ENCODE measurements at regions of chr10 and their contacts with region 1.

Region 1: DNA sequence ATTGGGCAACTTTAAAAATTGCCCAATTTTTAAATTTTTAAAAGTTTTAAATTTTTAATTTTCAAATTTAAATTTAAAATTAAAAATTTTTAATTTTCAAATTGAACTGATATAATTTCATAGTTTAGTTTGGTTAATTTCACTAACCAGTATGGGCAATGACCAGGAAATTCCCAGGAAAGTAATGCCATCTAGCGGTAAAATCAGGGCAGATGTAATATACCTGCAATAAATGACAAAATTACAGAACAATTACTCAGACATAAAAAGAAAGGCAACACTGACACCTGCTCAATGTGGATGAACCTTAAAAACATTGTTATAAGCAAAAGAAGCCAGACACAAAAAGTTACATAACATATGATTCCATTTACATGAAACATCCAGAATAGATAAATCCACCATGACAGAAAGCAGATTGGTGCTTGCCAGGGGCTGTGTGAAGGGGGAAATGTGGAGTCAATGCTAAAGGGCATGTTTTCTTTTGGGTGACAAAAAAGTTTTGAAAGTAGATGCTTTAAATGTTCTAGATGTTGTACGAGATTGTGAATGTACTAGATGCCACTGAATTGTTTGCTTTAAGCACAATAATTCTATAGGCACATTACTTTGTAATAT is 28.6 kb upstream of the SLC16A12 start:
- DNase-seq: peak; percentile 37
- ATAC-seq: peak; percentile 73 to 84
- H3K4me3 ChIP-seq: no peak overlapping the region
- H3K27ac ChIP-seq: no peak overlapping the region
- H3K4me1 ChIP-seq: no peaks in the 10 kb centered on the region
- CTCF ChIP-seq: peak; percentile 97
- EP300 ChIP-seq: no peak
- POLR2A ChIP-seq: no peak
- RAD21 ChIP-seq: peak; percentile 93 to 97

Region 2: DNA sequence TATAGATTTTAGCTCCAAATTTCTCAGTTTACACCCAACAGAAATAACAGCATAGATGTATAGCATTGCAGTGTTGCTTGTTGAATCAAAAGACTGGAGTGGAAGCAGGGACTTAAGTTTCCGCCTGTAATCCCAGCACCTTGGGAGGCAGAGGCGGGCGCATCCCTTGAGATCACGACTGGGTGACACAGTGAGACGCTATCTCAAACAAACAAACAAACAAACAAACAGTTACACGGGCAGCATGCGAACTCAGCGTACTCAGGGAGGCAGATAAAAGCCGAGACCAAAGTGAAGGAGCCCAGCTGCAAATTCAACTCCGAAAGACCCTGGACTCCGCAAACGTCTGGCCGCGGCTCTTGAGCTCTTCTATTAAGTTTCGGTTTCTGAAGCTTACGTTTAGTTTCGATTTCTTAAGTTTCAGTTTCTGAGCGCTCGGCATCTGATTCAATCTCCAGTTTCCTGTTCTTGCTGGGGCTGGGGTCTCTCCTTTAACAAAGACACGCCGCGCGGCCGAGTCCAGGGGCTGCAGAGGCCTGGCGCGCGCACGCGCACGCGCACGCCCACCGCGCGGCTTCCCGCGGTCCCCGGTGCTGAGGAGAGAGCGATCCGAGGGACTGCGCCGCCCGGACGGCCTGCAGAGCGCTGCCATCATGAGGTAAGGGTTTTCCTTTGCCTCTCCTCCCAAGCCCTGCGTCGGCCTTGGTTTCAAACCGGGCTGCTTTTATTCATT is 149.7 kb before region 1 on chr10 and contains the start of gene IFIT5:
- CTCF ChIA-PET with region 1: interaction called, 10 read pairs
- POLR2A ChIA-PET with region 1: no interaction called
- DNase-seq: peak; percentile 71 to 74
- ATAC-seq: peak; percentile 92 to 96
- H3K4me3 ChIP-seq: peak within 1 kb of the TSS; percentile 68
- H3K27ac ChIP-seq: peak within 1 kb of the TSS; percentile 84 to 97
- H3K4me1 ChIP-seq: peaks cover 12% of the 10 kb centered on the region; the same call in 1 of the 3 replicates
- CTCF ChIP-seq: no peak
- EP300 ChIP-seq: no peak
- POLR2A ChIP-seq: peak; percentile 54
- RAD21 ChIP-seq: 0 out of 5 replicates have a peak, but pooled peaks of 1 of the 2 experiments have one; percentile 20
- polyA plus RNA-seq, gene IFIT5: 10.1 and 11.5 TPM in 2 replicates

Region 3: DNA sequence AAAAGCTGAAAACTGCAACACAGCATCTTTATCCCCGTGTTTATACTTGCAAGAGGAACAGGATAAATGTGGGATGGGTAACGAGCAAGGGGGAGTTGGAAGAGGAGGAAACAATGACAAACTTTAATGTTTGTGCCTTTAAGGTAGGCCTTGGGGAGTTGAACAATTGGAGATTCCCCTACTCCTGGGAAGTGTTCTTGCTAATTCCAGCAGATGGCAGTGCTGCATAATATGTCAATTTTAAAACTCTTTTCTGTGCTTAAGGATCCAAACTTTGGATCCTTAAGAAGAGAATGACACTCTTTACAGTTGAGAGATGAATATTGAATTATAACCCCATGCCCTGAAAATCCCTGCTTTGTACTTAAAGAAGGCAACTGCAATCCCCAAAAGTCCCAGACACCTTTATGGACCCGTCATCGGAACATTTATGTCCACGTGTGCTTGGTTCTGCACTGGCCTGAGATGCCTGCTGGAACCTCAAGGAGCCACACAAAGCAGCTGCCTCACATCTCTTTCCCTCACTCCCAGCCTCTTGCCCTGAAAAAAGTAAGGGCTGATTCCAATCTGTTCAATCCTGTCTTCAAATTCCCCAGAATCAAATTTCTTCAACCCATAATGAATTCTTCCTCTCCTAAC is 137.6 kb before region 1 on chr10:
- CTCF ChIA-PET with region 1: interaction called, 88 read pairs
- POLR2A ChIA-PET with region 1: no interaction called
- DNase-seq: peak; percentile 56 to 57
- ATAC-seq: peak; percentile 87 to 94
- H3K4me3 ChIP-seq: no peak overlapping the region
- H3K27ac ChIP-seq: peak overlapping the region in 1 of 2 experiments; percentile 1; a peak in 1 of 6 replicates
- H3K4me1 ChIP-seq: peaks cover 13% of the 10 kb centered on the region
- CTCF ChIP-seq: peak; percentile 93
- EP300 ChIP-seq: no peak
- POLR2A ChIP-seq: no peak
- RAD21 ChIP-seq: peak; percentile 95

Region 4: GRCh38 chr10:89431977-89432376 is 132.0 kb before region 1 on chr10:
- CTCF ChIA-PET with region 1: interaction called, 88 read pairs
- POLR2A ChIA-PET with region 1: no interaction called
- DNase-seq: peak in 1 of 2 experiments; percentile 21
- ATAC-seq: no peak
- H3K4me3 ChIP-seq: no peak overlapping the region
- H3K27ac ChIP-seq: no peak overlapping the region
- H3K4me1 ChIP-seq: peaks cover 7% of the 10 kb centered on the region; the same call in 2 of the 3 replicates
- CTCF ChIP-seq: no peak
- EP300 ChIP-seq: no peak
- POLR2A ChIP-seq: no peak
- RAD21 ChIP-seq: no peak

Region 5: DNA sequence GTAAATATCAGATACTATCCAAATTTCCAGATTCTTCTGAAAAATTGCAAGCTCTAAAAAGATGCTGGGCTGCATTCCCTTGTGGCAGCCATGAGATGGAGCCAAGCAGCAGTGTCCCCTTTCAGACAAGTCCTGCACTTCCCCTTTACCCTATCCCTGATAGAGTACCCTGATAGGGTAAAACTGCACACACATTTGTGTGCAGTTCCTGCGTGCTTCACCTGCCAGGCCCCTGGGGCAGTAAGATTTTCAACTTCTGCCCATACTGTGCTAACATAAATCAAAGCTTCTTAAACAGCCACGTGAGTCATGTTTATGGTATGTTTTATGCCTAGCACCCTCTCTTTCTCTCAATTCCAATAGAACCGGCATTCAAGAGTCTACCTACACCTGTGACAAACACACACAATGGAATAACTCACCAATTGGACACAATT is 97.4 kb before region 1 on chr10:
- CTCF ChIA-PET with region 1: interaction called, 13 read pairs
- POLR2A ChIA-PET with region 1: interaction called, 3 read pairs
- DNase-seq: peak in 1 of 2 experiments; percentile 53
- ATAC-seq: peak; percentile 93 to 97
- H3K4me3 ChIP-seq: no peak overlapping the region
- H3K27ac ChIP-seq: peak overlapping the region; percentile 17 to 26; a peak in 4 of 6 replicates
- H3K4me1 ChIP-seq: peaks cover 21% of the 10 kb centered on the region; the same call in 2 of the 3 replicates
- CTCF ChIP-seq: peak; percentile 49
- EP300 ChIP-seq: no peak
- POLR2A ChIP-seq: no peak
- RAD21 ChIP-seq: peak; percentile 65 to 70

Measured in A549 (cell line).